Sciatic nerve (tissue), 2 donors: ENCODE measurements at regions of chr13 and their contacts with region 1.

Region 1: GRCh38 chr13:98443329-98443728 is 133.6 kb downstream of the STK24 start:
- DNase-seq: no peak
- ATAC-seq: no peak

Region 2: DNA sequence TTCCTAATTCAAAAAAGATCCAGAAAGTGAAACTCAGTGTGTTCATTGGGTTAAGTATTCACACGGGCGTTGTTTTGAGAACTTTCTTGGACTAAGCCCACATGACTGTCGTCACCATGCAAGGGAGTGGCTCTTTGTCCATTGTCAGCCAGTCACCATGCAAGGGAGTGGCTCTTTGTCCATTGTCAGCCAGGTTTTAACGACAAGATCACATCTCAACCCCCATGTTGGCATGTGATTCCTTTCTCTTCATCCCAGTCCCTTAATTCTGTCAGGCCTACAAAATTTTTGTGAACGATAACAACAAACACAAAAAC is 214.8 kb after region 1 on chr13:
- intact Hi-C with region 1: loop called (anchors 5 kb)
- DNase-seq: no peak
- ATAC-seq: peak; percentile 77

Region 3: DNA sequence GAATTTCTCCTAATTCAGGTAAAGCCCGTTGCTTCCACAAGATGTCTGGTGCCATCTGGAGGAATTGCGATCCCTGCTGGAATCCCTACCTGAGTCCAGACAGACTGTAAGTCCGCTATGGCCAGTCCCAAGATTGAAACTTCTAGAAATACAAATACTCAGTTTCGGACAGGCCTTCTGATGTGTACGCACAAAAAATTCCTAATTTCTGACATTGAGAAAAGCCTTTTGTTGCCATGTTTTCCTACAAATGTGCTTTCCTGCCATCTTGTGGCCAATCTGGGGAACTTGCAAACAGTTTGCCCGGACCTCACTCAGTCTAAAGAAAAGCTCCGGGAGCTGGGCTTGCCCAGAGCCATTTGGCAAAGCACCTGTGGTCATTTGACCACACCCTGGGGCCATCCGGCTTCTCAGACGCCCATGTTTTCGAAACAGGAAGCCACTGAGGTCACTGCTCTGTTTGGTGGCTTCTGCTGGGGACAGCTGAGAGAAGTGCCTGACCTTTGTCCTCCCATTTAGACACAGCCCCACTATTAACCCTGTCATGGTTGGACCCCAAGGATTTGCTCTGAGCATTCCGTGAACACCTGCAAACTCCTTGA is 229.7 kb after region 1 on chr13:
- intact Hi-C with region 1: loop called (anchors 5 kb)
- DNase-seq: peak; percentile 76
- ATAC-seq: peak; percentile 92